ENCODE measurements at regions of chr9 and their contacts with region 1.

Region 1: GRCh38 chr9:1939926-1940368 is 75.2 kb upstream of the SMARCA2 start:
- DNase-seq: peak; percentile 82
- ATAC-seq: peak; percentile 87
- H3K4me3 ChIP-seq: peak overlapping the region; percentile 39
- H3K27ac ChIP-seq: peak overlapping the region; percentile 97
- H3K4me1 ChIP-seq: peaks cover 25% of the 10 kb centered on the region
- H3K27me3 ChIP-seq: no peaks in the 10 kb centered on the region
- CTCF ChIP-seq: peak; percentile 94 to 99 (median 97)
- EP300 ChIP-seq: peak; percentile 19 to 23; a peak in 1 of 4 replicates
- POLR2A ChIP-seq: no peak
- RAD21 ChIP-seq: peak; percentile 95

Region 2: DNA sequence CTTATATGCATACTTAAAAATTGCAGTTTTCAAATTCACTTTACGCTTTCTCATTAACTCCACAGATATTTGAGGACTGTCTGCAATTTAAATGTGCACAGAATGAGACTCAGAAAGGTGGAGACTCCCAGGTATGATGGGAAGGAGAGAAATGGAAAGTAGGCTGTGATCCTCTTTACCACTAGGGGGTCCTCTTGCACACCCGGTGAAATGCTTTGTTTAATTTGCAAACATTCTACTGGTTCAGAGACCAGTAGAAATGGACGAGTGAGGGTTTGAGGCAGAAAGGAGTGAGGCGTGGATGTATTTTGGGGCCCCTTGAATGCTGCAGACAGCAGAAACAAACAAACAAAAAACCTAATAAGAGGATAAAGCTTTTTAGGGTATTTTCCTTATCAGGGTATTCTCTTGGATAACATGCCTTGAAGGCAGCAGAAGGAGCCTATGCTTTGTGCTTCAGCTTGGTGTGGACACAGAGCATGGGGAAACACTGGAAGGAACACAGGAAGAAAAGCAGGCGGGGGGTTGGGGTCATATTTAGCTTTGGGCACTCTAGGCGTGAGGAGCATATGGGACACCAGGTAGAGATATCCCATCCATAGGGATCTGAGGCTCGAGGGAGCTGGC is 479.7 kb before region 1 on chr9:
- CTCF ChIA-PET with region 1: interaction called, 20 read pairs
- POLR2A ChIA-PET with region 1: interaction called, 4 read pairs
- RAD21 ChIA-PET with region 1: interaction called, 8 read pairs
- SMC1A ChIA-PET with region 1: interaction called, 10 read pairs
- in situ Hi-C with region 1: no loop called
- intact Hi-C with region 1: loop called (anchors 5 kb)
- DNase-seq: peak; percentile 25
- ATAC-seq: peak; percentile 89
- H3K4me3 ChIP-seq: no peak overlapping the region
- H3K27ac ChIP-seq: no peak overlapping the region
- H3K4me1 ChIP-seq: no peaks in the 10 kb centered on the region
- H3K27me3 ChIP-seq: no peaks in the 10 kb centered on the region
- CTCF ChIP-seq: peak; percentile 79 to 83 (median 80)
- EP300 ChIP-seq: no peak
- POLR2A ChIP-seq: no peak
- RAD21 ChIP-seq: peak; percentile 99

Region 3: GRCh38 chr9:1535051-1535450 is 404.9 kb before region 1 on chr9:
- CTCF ChIA-PET with region 1: no interaction called
- POLR2A ChIA-PET with region 1: no interaction called
- RAD21 ChIA-PET with region 1: no interaction called
- SMC1A ChIA-PET with region 1: no interaction called
- in situ Hi-C with region 1: no loop called
- intact Hi-C with region 1: no loop called
- DNase-seq: no peak
- ATAC-seq: peak; percentile 72
- H3K4me3 ChIP-seq: no peak overlapping the region
- H3K27ac ChIP-seq: no peak overlapping the region
- H3K4me1 ChIP-seq: peaks cover 6% of the 10 kb centered on the region; the same call in 1 of the 2 replicates
- H3K27me3 ChIP-seq: no peaks in the 10 kb centered on the region
- CTCF ChIP-seq: no peak
- EP300 ChIP-seq: 0 out of 4 replicates have a peak, but pooled peaks of 1 of the 2 experiments have one; percentile 12
- POLR2A ChIP-seq: no peak
- RAD21 ChIP-seq: no peak

Region 4: GRCh38 chr9:1668441-1668840 is 271.5 kb before region 1 on chr9:
- CTCF ChIA-PET with region 1: no interaction called
- POLR2A ChIA-PET with region 1: no interaction called
- RAD21 ChIA-PET with region 1: no interaction called
- SMC1A ChIA-PET with region 1: no interaction called
- in situ Hi-C with region 1: no loop called
- intact Hi-C with region 1: no loop called
- DNase-seq: no peak
- ATAC-seq: no peak
- H3K4me3 ChIP-seq: no peak overlapping the region
- H3K27ac ChIP-seq: no peak overlapping the region
- H3K4me1 ChIP-seq: no peaks in the 10 kb centered on the region
- H3K27me3 ChIP-seq: no peaks in the 10 kb centered on the region
- CTCF ChIP-seq: no peak
- EP300 ChIP-seq: no peak
- POLR2A ChIP-seq: no peak
- RAD21 ChIP-seq: no peak

Region 5: GRCh38 chr9:1726993-1727759 is 212.8 kb before region 1 on chr9:
- CTCF ChIA-PET with region 1: interaction called, 27 read pairs
- POLR2A ChIA-PET with region 1: interaction called, 3 read pairs
- RAD21 ChIA-PET with region 1: interaction called, 37 read pairs
- SMC1A ChIA-PET with region 1: interaction called, 39 read pairs
- in situ Hi-C with region 1: no loop called
- intact Hi-C with region 1: loop called (anchors 1 kb)
- DNase-seq: no peak
- ATAC-seq: peak; percentile 87
- H3K4me3 ChIP-seq: no peak overlapping the region
- H3K27ac ChIP-seq: no peak overlapping the region
- H3K4me1 ChIP-seq: peaks cover 6% of the 10 kb centered on the region; the same call in 1 of the 2 replicates
- H3K27me3 ChIP-seq: no peaks in the 10 kb centered on the region
- CTCF ChIP-seq: peak; percentile 26 to 45 (median 38); a peak in 5 of 6 replicates
- EP300 ChIP-seq: no peak
- POLR2A ChIP-seq: no peak
- RAD21 ChIP-seq: peak; percentile 62

Region 6: GRCh38 chr9:1869843-1870242 is 70.1 kb before region 1 on chr9:
- CTCF ChIA-PET with region 1: interaction called, 94 read pairs
- POLR2A ChIA-PET with region 1: interaction called, 9 read pairs
- RAD21 ChIA-PET with region 1: interaction called, 32 read pairs
- SMC1A ChIA-PET with region 1: interaction called, 55 read pairs
- in situ Hi-C with region 1: loop called (anchors 5 kb)
- intact Hi-C with region 1: no loop called
- DNase-seq: no peak
- ATAC-seq: peak; percentile 82
- H3K4me3 ChIP-seq: no peak overlapping the region
- H3K27ac ChIP-seq: 0 out of 2 replicates have a peak overlapping the region, but pooled peaks have one; percentile 14
- H3K4me1 ChIP-seq: peaks cover 28% of the 10 kb centered on the region
- H3K27me3 ChIP-seq: no peaks in the 10 kb centered on the region
- CTCF ChIP-seq: peak; percentile 53 to 72 (median 62)
- EP300 ChIP-seq: no peak
- POLR2A ChIP-seq: no peak
- RAD21 ChIP-seq: peak; percentile 91

Region 7: GRCh38 chr9:1916655-1917054 is 23.3 kb before region 1 on chr9:
- CTCF ChIA-PET with region 1: interaction called, 9 read pairs
- POLR2A ChIA-PET with region 1: interaction called, 4 read pairs
- RAD21 ChIA-PET with region 1: interaction called, 33 read pairs
- SMC1A ChIA-PET with region 1: interaction called, 90 read pairs
- in situ Hi-C with region 1: no loop called
- intact Hi-C with region 1: no loop called
- DNase-seq: no peak
- ATAC-seq: no peak
- H3K4me3 ChIP-seq: no peak overlapping the region
- H3K27ac ChIP-seq: no peak overlapping the region
- H3K4me1 ChIP-seq: peaks cover 3% of the 10 kb centered on the region; the same call in 1 of the 2 replicates
- H3K27me3 ChIP-seq: no peaks in the 10 kb centered on the region
- CTCF ChIP-seq: no peak
- EP300 ChIP-seq: no peak
- POLR2A ChIP-seq: no peak
- RAD21 ChIP-seq: no peak

Region 8: GRCh38 chr9:2087500-2088313 is 147.8 kb after region 1 on chr9:
- CTCF ChIA-PET with region 1: interaction called, 51 read pairs
- POLR2A ChIA-PET with region 1: no interaction called
- RAD21 ChIA-PET with region 1: interaction called, 13 read pairs
- SMC1A ChIA-PET with region 1: interaction called, 16 read pairs
- in situ Hi-C with region 1: no loop called
- intact Hi-C with region 1: loop called (anchors 2 kb)
- DNase-seq: peak; percentile 45
- ATAC-seq: peak; percentile 91
- H3K4me3 ChIP-seq: no peak overlapping the region
- H3K27ac ChIP-seq: peak overlapping the region; percentile 38
- H3K4me1 ChIP-seq: peaks cover 4% of the 10 kb centered on the region; the same call in 1 of the 2 replicates
- H3K27me3 ChIP-seq: no peaks in the 10 kb centered on the region
- CTCF ChIP-seq: peak; percentile 60 to 68 (median 65)
- EP300 ChIP-seq: no peak
- POLR2A ChIP-seq: no peak
- RAD21 ChIP-seq: peak; percentile 68

Region 9: GRCh38 chr9:2140600-2141223 is 200.8 kb after region 1 on chr9:
- CTCF ChIA-PET with region 1: no interaction called
- POLR2A ChIA-PET with region 1: no interaction called
- RAD21 ChIA-PET with region 1: no interaction called
- SMC1A ChIA-PET with region 1: no interaction called
- in situ Hi-C with region 1: no loop called
- intact Hi-C with region 1: no loop called
- DNase-seq: no peak
- ATAC-seq: no peak
- H3K4me3 ChIP-seq: no peak overlapping the region
- H3K27ac ChIP-seq: no peak overlapping the region
- H3K4me1 ChIP-seq: no peaks in the 10 kb centered on the region
- H3K27me3 ChIP-seq: no peaks in the 10 kb centered on the region
- CTCF ChIP-seq: no peak
- EP300 ChIP-seq: no peak
- POLR2A ChIP-seq: no peak
- RAD21 ChIP-seq: no peak